Heart left ventricle (tissue), 16 donors: ENCODE measurements at regions of chr15 and their contacts with region 1.

Region 1: DNA sequence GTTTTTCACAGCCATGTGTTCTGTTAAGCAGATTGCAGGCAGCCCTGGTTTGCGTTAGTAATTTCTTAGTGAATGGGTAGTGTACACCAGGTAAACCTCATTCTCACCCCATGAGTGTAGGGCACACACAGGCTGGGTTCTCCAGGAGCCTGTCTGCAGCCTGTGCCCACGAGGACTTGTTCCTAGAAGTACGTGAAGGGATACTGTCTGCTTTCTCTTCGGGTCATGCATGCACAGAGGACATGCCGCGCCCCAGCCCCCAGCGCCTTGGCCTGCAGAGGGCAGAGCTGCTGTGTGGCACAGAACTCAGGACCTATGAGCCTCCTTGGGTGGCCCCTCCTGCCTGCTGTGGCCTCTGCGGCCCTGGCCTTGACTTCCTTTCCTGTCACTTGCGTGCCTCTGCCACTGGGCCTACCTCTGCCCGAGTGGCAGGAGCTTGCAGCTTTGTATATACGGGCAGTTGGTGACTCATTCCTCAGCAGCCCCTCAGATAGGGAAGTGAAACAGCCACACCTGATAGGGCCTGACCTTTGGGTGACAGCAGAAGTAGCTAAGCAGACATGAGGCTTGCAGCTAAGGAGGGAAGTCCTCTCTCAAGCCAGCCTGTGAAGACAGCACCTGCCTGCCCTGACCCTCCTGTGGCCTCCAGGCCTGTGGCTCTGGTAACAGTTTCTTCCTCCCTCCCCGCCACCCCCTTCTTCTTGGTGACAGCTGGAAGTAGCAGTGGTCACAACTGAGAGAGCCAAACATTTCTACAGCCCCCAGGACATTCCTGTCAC is 19.5 kb downstream of the PPCDC start:
- DNase-seq: peak; percentile 84 to 92 (median 91)
- ATAC-seq: peak; percentile 60 to 68 (median 62)
- H3K4me3 ChIP-seq: peak overlapping the region in 2 of 12 donors; percentile 13 to 32
- H3K27ac ChIP-seq: peak overlapping the region; percentile 85 to 96 (median 90)
- H3K4me1 ChIP-seq: peaks cover 44 to 86% (median 58%) of the 10 kb centered on the region in 12 donors
- H3K27me3 ChIP-seq: no peaks in the 10 kb centered on the region
- CTCF ChIP-seq: peak; percentile 46 to 76 (median 64)
- POLR2A ChIP-seq: no peak

Region 2: DNA sequence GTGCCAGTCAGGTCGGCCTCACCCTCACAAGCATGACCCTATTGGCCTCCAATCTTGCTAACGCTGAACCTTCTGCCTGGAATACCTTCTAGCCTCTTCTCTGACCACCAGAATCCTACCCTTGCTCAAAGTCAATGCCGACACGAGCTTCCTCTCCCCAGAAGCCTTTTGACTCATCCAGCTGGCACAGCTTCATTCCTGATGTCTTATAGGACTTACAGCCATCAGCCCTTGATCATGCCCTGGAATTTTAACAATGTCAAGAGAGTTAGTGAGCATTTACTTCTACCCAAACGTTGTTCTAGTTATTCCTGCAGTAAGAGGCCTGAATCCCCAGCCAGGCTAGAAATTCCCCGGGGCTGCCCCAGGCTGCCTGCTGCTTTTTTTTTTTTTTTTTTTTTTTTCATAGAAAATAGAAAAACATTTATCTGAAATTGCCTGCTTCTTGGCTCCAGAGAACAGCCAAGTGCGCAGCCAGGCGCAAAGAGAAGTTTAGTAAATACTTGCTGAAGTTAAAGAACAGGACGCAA is 290.4 kb before region 1 on chr15:
- intact Hi-C with region 1: no loop called
- DNase-seq: no peak
- ATAC-seq: no peak
- H3K4me3 ChIP-seq: no peak overlapping the region
- H3K27ac ChIP-seq: no peak overlapping the region
- H3K4me1 ChIP-seq: no peaks in the 10 kb centered on the region
- H3K27me3 ChIP-seq: no peaks in the 10 kb centered on the region
- CTCF ChIP-seq: no peak
- POLR2A ChIP-seq: no peak

Region 3: DNA sequence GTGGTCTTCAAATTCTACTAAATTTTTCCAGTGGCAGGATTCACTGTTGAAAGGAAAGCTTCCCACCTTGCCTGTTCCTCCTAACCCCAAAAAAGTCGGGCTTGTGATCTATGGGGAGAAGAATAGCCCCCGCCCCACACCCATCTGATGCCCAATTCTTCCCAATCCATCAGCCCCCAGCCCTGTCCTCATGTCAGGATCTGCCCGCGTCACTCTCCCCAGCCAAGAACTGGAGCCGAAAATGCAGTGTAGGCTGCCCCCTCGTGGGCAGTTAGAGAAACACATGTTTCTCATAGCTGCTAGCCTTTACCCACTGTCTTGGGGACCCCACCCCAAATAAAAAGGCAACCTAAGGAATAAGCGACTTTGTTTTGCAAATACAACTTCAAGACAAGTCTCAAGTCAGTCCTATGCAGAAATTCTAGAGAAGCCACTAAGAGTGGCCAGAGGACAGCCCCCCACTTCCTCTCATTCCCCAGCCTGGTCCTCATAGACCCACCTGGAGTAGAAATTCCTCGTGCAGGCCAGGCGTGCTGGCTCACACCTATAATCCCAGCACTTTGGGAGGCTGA is 274.1 kb before region 1 on chr15:
- intact Hi-C with region 1: no loop called
- DNase-seq: peak; percentile 57 to 83 (median 68)
- ATAC-seq: peak; percentile 38 to 65 (median 56)
- H3K4me3 ChIP-seq: peak overlapping the region in 2 of 12 donors; percentile 20 to 27
- H3K27ac ChIP-seq: no peak overlapping the region
- H3K4me1 ChIP-seq: peaks cover 0 to 16% (median 3%) of the 10 kb centered on the region in 12 donors
- H3K27me3 ChIP-seq: peaks cover 0 to 6% (median 0%) of the 10 kb centered on the region in 9 donors
- CTCF ChIP-seq: peak; percentile 73 to 92 (median 84)
- POLR2A ChIP-seq: no peak

Region 4: GRCh38 chr15:74882528-74882927 is 160.4 kb before region 1 on chr15:
- intact Hi-C with region 1: no loop called
- DNase-seq: no peak
- ATAC-seq: no peak
- H3K4me3 ChIP-seq: no peak overlapping the region
- H3K27ac ChIP-seq: no peak overlapping the region
- H3K4me1 ChIP-seq: peaks cover 0 to 29% (median 0%) of the 10 kb centered on the region in 12 donors
- H3K27me3 ChIP-seq: no peaks in the 10 kb centered on the region
- CTCF ChIP-seq: no peak
- POLR2A ChIP-seq: no peak

Region 5: DNA sequence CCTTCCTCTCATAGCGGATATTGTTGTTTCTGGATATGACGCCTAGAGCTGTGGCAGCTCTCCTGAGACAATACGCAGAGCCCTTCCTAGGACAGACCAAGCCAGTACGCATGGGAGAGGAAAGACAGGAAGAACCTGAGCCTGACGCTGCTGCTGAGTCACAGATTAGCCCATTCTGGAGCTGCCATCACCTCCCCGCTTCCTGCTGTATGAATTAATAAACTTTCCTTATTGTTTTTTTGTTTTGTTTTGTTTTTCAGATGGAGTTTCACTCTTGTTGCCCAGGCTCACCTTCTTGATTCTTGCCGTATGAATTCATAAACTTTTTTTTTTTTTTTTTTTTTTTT is 47.4 kb after region 1 on chr15:
- intact Hi-C with region 1: loop called in 1 of 10 experiments (anchors 5 kb)
- DNase-seq: peak in 4 of 5 donors; percentile 67 to 78 (median 72)
- ATAC-seq: peak; percentile 88 to 98 (median 96)
- H3K4me3 ChIP-seq: peak overlapping the region in 1 of 12 donors; percentile 15
- H3K27ac ChIP-seq: peak overlapping the region; percentile 68 to 91 (median 82)
- H3K4me1 ChIP-seq: peaks cover 0 to 11% (median 5%) of the 10 kb centered on the region in 12 donors
- H3K27me3 ChIP-seq: no peaks in the 10 kb centered on the region
- CTCF ChIP-seq: no peak
- POLR2A ChIP-seq: no peak

Region 6: GRCh38 chr15:75453703-75454470 is 411.0 kb after region 1 on chr15:
- intact Hi-C with region 1: loop called in 1 of 10 experiments (anchors 5 kb)
- DNase-seq: peak; percentile 98 to 99 (median 98)
- ATAC-seq: peak; percentile 65 to 76 (median 70)
- H3K4me3 ChIP-seq: peak overlapping the region; percentile 84 to 98 (median 95)
- H3K27ac ChIP-seq: peak overlapping the region; percentile 94 to 100 (median 98)
- H3K4me1 ChIP-seq: peaks cover 4 to 37% (median 26%) of the 10 kb centered on the region in 12 donors
- H3K27me3 ChIP-seq: no peaks in the 10 kb centered on the region
- CTCF ChIP-seq: peak in 4 of 12 donors; percentile 10 to 39 (median 20)
- POLR2A ChIP-seq: peak in 1 of 2 donors; percentile 52

Region 7: DNA sequence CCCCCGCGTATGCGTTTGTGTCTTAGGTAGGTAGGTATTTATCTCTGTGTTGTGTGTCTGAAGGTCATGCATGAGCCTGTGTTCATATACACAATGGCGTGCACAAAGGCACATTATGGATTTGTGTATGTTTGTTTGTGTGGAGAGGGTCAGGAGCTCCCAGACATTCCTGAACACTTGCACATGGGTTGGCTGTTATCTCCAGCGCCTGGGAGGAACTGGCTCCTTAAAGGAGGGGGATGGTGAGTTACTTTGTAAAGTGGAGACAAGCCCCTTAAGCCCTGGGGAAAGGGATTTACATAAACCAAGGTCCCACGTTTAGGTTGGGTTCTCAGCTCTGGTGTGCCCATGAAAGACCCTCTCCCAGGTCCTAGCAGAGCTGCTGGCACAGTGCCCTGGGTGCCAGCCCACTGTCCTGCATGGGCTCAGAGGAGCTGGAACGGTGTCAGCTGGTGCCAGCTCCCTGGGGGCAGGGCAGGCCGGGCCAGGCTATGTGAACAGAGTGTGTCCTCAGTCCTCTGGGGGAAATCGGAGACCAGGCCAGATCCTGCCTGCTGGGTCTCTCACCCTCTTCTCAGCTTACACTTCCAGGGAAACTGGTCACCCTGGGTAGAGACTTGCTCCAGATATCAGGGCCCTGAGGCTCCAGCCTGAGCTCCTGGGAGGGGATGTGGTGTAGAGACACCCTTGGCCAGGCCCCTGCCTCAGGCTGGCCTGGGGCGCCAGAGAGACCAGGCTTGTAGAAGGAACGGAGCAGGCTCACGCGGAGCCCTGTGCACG is 629.9 kb after region 1 on chr15:
- intact Hi-C with region 1: no loop called
- DNase-seq: no peak
- ATAC-seq: peak; percentile 24 to 36 (median 30)
- H3K4me3 ChIP-seq: peak overlapping the region in 2 of 12 donors; percentile 1 to 6
- H3K27ac ChIP-seq: peak overlapping the region; percentile 51 to 89 (median 64)
- H3K4me1 ChIP-seq: peaks cover 15 to 65% (median 28%) of the 10 kb centered on the region in 12 donors
- H3K27me3 ChIP-seq: no peaks in the 10 kb centered on the region
- CTCF ChIP-seq: no peak
- POLR2A ChIP-seq: no peak